Aorta (tissue), 5 donors: ENCODE measurements at regions of chr11 and their contacts with region 1.

Region 1: DNA sequence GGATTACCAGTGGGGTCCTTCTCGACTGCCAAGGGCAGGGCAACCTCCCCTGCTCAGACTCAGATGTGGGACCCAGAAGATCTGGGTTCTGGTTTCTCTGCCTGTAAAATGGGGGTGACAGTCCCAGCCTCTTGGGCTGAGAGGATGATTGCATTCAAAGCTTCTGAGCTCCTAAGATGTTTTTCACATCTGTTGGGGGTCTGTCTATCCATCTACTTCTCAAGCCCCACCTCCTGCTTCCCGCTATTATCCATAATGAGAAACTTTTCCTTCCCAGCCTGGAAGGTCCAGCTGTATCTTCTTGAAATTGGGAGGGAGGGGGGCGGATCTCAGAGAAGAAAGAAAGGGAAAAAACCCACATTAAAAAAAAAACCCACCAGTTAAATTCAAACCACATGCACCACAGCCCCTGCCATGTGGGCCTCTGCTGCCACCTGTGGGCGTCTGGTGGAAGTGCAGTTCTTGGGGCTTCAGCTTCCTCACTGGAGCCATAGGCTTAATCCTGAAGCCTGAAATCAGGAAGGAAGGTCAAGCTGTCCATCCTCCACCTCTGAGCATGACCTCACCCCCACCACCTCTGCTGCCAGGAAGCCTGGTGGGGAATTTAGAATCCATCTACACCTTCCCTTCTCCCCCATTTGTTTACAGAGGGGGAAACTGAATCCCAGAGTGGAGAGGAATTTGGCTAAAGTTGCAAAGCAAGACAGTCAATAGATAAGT is 27.3 kb downstream of the ARHGEF17 start:
- DNase-seq: peak; percentile 87 to 94
- ATAC-seq: peak; percentile 85
- H3K4me3 ChIP-seq: no peak overlapping the region
- H3K27ac ChIP-seq: peak overlapping the region in 1 of 2 donors; percentile 39
- H3K4me1 ChIP-seq: peaks cover 0 to 14% of the 10 kb centered on the region in 2 donors
- H3K27me3 ChIP-seq: no peaks in the 10 kb centered on the region

Region 2: DNA sequence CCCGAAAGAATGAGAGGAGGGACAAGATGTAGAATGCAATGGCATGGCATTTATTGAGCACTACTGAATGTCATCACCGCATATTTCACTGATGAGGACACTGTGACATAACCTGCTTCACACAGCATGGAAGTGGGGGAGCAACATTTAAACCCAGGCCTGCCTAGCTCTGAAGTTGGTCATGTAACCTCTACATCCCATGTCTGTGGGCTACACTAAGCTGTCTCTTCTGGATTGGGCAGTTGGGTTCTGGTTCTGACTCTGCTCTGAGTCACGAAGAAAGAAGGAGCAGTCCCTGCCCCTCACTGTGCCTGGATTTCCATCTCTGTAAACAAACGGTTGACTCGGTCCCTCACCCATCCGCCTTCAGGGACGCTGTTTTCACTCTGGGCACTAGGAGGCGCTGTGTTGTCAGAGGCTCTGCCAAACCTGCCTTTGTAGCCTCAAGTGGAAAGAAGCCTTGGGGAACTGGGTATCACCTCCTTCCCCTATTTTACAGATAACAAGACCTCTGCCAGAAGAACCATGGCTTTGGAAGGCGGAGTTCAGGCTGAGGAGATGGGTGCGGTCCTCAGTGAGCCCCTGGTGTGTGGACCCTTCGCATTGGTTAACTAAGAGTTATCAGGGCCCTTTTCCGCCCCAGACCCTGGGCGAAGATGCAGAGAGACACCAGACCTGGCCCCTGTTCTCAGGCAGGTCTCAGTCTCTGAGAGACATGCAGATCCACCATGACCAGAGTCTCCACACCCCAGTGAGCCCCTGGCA is 40.0 kb before region 1 on chr11:
- intact Hi-C with region 1: loop called in 1 of 2 experiments (anchors 5 kb)
- DNase-seq: peak; percentile 80 to 92
- ATAC-seq: peak; percentile 51
- H3K4me3 ChIP-seq: no peak overlapping the region
- H3K27ac ChIP-seq: no peak overlapping the region
- H3K4me1 ChIP-seq: no peaks in the 10 kb centered on the region
- H3K27me3 ChIP-seq: no peaks in the 10 kb centered on the region

Region 3: DNA sequence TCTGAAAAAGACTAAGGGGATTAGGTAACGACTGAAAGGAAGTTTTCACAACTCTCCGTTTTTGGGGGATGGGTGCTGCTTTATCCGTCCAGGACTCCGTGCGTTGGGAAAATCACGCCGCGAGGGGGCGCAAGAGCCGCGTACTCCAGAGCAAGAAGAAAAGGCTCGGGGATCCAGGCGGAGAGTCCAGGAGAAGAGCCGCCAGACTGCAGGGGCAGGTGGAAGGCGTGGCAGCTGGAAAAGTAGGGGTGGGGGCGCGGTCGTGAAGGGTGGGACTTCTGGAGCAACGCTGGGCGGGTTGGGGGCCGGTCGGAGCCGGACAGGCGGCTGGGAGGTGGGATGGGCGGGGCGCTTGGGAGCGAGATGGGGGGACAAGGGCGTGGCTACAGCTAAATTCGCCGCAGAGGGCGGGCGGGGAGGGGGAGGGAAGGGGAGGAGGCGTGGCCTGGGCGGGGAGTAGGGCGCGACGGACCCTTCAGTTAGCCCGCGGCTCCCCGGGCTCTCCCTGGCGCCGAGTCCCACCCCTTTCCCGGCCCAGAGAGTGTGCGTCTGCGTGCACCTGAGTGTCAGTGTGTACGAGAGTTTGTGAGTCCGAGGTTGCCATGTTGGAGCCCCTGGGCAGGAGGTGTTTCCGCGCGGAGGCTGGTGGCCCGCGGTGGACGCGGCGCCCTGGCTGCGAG is 27.9 kb before region 1 on chr11:
- intact Hi-C with region 1: loop called (anchors 1 kb)
- DNase-seq: peak; percentile 98 to 100
- ATAC-seq: peak; percentile 83
- H3K4me3 ChIP-seq: peak overlapping the region; percentile 46 to 91
- H3K27ac ChIP-seq: peak overlapping the region in 1 of 2 donors; percentile 72
- H3K4me1 ChIP-seq: no peaks in the 10 kb centered on the region
- H3K27me3 ChIP-seq: no peaks in the 10 kb centered on the region

Region 4: DNA sequence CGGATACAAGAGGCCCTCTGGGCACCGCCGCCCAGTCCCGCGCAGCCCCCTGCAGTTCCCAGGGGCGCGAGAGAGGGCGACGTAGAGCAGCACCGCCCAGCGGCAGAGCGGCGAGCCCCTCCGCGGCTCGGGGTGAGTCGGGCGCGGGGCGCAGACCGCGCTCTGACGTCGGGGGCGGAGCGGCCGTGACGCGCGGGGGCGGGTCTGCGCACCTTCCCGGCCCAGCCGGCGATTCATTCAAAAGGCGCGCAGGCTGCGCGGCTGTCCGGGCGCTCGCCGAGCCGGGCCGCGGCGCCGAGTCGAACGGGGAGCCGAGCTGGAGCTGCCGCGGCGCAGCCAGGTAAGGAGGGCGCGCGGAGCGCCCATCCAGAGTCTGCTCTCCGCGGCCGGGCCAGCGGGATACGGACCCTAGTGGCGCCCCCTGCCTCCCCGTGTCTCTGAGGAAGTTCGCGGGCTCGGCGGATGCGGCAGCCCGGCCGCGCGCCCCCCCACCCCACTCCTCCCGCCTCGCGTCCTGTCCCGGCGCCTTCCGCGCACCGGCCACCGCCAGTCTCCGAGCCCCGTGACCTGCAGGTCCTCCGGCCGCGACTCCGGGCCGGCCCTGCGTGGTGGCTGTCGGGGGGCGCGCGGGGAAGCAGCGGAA is 40.9 kb after region 1 on chr11 and contains the start of gene RELT:
- intact Hi-C with region 1: no loop called
- DNase-seq: peak; percentile 93 to 97
- ATAC-seq: peak; percentile 95
- H3K4me3 ChIP-seq: peak within 1 kb of the TSS; percentile 27 to 42
- H3K27ac ChIP-seq: peak within 1 kb of the TSS in 1 of 2 donors; percentile 50
- H3K4me1 ChIP-seq: no peaks in the 10 kb centered on the region
- H3K27me3 ChIP-seq: no peaks in the 10 kb centered on the region
- total RNA-seq, gene RELT: 11.5 to 13.2 TPM

Region 5: DNA sequence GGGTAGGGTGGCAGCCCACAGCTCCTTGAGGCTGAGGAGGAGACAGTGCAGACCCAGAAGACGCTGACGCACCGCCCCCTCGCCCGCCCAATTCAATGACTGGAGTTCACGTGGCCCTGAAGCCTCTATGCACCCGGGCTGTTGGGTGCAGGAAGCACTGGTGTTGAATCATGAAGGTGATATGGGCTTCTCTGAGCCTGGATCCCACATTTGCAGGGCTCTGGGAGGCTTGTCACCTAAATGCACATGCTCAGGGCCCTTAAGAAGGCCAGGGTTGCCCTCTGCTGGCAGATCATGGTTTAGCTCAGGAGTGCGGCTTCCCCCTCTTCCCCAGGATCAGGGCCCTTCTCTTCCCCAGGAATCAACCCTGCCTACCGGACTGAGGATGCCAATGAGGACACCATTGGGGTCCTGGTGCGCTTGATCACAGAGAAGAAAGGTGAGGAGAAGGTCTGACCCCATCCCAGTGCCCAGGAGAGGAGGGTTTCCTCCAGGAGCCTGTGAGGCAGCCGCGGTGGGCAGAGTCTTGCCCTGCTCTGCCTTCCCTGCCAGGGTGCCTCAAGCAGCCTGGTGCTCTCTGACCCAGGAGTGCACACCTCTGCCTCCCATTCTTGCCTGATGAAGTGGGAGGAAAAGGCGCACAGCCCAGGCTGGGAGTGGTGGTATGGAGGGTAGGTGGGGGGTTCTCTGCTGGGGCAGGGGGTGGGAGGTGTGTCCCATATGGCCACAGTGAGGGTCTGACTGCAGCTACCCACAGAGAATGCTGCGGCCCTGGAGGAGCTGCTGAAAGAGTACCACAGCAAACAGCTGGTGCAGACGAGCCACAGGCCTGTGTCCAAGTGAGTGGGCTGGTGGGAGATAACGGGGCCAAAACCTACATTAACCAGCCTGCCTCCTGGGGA is 58.4 kb after region 1 on chr11:
- intact Hi-C with region 1: no loop called
- DNase-seq: peak; percentile 80 to 89
- ATAC-seq: peak; percentile 68
- H3K4me3 ChIP-seq: no peak overlapping the region
- H3K27ac ChIP-seq: no peak overlapping the region
- H3K4me1 ChIP-seq: no peaks in the 10 kb centered on the region
- H3K27me3 ChIP-seq: no peaks in the 10 kb centered on the region